K562 (cell line): ENCODE measurements at regions of chr11 and their contacts with region 1.

Region 1: GRCh38 chr11:2699531-2700414 is at the start of gene KCNQ1OT1:
- DNase-seq: peak; percentile 93 to 99 (median 94)
- ATAC-seq: peak; percentile 94
- H3K4me3 ChIP-seq: peak within 1 kb of the TSS; percentile 69
- H3K27ac ChIP-seq: peak within 1 kb of the TSS; percentile 92
- H3K4me1 ChIP-seq: peaks cover 20 to 47% of the 10 kb centered on the region in 2 experiments; a peak in 4 of 5 replicates
- H3K27me3 ChIP-seq: no peaks in the 10 kb centered on the region
- CTCF ChIP-seq: 0 out of 6 replicates have a peak, but pooled peaks of 1 of the 3 experiments have one; percentile 2
- EP300 ChIP-seq: 0 out of 2 replicates have a peak, but pooled peaks have one; percentile 9
- POLR2A ChIP-seq: peak; percentile 97
- RAD21 ChIP-seq: peak in 1 of 2 experiments; percentile 18; a peak in 1 of 4 replicates
- polyA plus RNA-seq, gene KCNQ1OT1: 0.04 to 0.17 TPM

Region 2: DNA sequence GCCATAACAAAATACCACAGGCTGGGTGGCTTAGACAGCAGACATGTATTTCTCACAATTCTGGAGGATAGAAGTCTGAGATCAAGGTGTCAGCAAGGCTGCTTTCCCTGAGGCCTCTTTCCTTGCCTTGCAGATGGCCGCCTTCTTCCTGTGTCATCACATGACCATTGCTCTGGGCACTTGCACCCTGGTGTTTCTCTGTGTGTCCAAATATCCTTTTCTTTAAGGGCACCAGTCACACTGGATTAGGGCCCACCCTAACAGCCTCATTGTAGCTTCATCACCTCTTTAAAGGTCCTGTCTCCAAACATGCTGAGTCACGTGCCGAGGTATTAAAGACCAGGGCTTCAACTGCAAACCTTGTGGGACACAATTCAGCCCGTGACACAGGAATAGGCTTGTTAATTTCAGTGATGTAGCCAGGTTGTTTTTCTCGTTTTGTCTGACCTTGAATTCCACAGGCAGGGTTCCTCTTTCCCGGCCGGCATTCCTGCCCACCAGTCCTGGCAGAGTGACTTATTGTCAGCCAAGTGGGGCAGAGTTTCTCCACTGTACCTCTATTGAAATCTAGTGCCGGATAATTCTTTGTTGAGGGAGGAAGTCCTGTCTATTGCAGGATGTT is 100.1 kb before region 1 on chr11:
- CTCF ChIA-PET with region 1: no interaction called
- POLR2A ChIA-PET with region 1: no interaction called
- in situ Hi-C with region 1: no loop called
- intact Hi-C with region 1: no loop called
- DNase-seq: peak in 1 of 4 experiments; percentile 17
- ATAC-seq: 0 out of 3 replicates have a peak, but pooled peaks have one; percentile 49
- H3K4me3 ChIP-seq: no peak overlapping the region
- H3K27ac ChIP-seq: no peak overlapping the region
- H3K4me1 ChIP-seq: no peaks in the 10 kb centered on the region; a peak in 1 of 5 replicates
- H3K27me3 ChIP-seq: peaks cover 0 to 4% of the 10 kb centered on the region in 2 experiments; a peak in 3 of 5 replicates
- CTCF ChIP-seq: no peak
- EP300 ChIP-seq: no peak
- POLR2A ChIP-seq: no peak
- RAD21 ChIP-seq: no peak

Region 3: GRCh38 chr11:2713661-2714462 is 14.1 kb after region 1 on chr11:
- CTCF ChIA-PET with region 1: no interaction called
- POLR2A ChIA-PET with region 1: interaction called, 14 read pairs
- in situ Hi-C with region 1: no loop called
- intact Hi-C with region 1: no loop called
- DNase-seq: no peak
- ATAC-seq: no peak
- H3K4me3 ChIP-seq: no peak overlapping the region
- H3K27ac ChIP-seq: no peak overlapping the region
- H3K4me1 ChIP-seq: peaks cover 0 to 6% of the 10 kb centered on the region in 2 experiments; a peak in 4 of 5 replicates
- H3K27me3 ChIP-seq: peaks cover 2 to 56% of the 10 kb centered on the region in 2 experiments; a peak in 3 of 5 replicates
- CTCF ChIP-seq: no peak
- EP300 ChIP-seq: no peak
- POLR2A ChIP-seq: no peak
- RAD21 ChIP-seq: no peak